SK-N-SH (cell line): ENCODE measurements at regions of chr7 and their contacts with region 1.

Region 1: GRCh38 chr7:98617051-98617959 is at the start of gene NPTX2:
- DNase-seq: peak; percentile 99
- H3K4me3 ChIP-seq: peak within 1 kb of the TSS in 1 of 2 experiments; percentile 52; a peak in 2 of 4 replicates
- H3K27ac ChIP-seq: peak within 1 kb of the TSS in 1 of 2 experiments; percentile 28; a peak in 1 of 4 replicates
- H3K4me1 ChIP-seq: peaks cover 0 to 48% of the 10 kb centered on the region in 2 experiments; a peak in 2 of 4 replicates
- H3K27me3 ChIP-seq: no peaks in the 10 kb centered on the region
- CTCF ChIP-seq: no peak
- EP300 ChIP-seq: no peak
- RAD21 ChIP-seq: peak; percentile 48
- polyA plus RNA-seq, gene NPTX2: 0.41 and 1.2 TPM in 2 replicates

Region 2: GRCh38 chr7:98555403-98555802 is 61.9 kb before region 1 on chr7:
- CTCF ChIA-PET with region 1: interaction called, 7 read pairs
- POLR2A ChIA-PET with region 1: interaction called, 15 read pairs
- DNase-seq: no peak
- H3K4me3 ChIP-seq: no peak overlapping the region
- H3K27ac ChIP-seq: peak overlapping the region in 1 of 2 experiments; percentile 81; a peak in 2 of 4 replicates
- H3K4me1 ChIP-seq: peaks cover 0 to 37% of the 10 kb centered on the region in 2 experiments; a peak in 1 of 4 replicates
- H3K27me3 ChIP-seq: no peaks in the 10 kb centered on the region
- CTCF ChIP-seq: no peak
- EP300 ChIP-seq: no peak
- RAD21 ChIP-seq: no peak

Region 3: DNA sequence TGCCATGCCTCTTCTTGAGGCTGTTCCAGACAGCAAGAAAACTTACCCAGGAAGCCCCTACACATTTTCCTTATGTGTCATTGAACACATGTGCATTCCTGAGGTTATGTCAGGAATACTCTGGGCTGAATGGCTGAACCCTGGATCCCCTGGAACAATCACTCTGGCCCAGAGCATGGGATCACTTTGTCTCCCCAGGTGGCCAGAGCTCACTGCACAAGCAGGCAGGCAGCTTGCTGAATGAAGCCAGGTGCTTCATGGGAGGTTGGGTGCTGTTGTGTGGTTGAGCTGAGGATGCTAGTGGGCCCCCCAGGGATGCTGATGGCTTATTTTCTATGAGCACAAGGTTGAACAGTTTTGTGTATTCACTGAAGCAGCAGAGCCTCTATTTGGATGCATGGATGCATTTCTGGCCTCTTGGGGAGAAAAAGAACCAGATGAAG is 54.9 kb before region 1 on chr7:
- CTCF ChIA-PET with region 1: interaction called, 22 read pairs
- POLR2A ChIA-PET with region 1: interaction called, 15 read pairs
- DNase-seq: no peak
- H3K4me3 ChIP-seq: no peak overlapping the region
- H3K27ac ChIP-seq: peak overlapping the region in 1 of 2 experiments; percentile 88; a peak in 2 of 4 replicates
- H3K4me1 ChIP-seq: peaks cover 0 to 38% of the 10 kb centered on the region in 2 experiments; a peak in 2 of 4 replicates
- H3K27me3 ChIP-seq: no peaks in the 10 kb centered on the region
- CTCF ChIP-seq: no peak
- EP300 ChIP-seq: no peak
- RAD21 ChIP-seq: no peak

Region 4: GRCh38 chr7:98568891-98569290 is 48.4 kb before region 1 on chr7:
- CTCF ChIA-PET with region 1: interaction called, 22 read pairs
- POLR2A ChIA-PET with region 1: interaction called, 11 read pairs
- DNase-seq: peak; percentile 83
- H3K4me3 ChIP-seq: no peak overlapping the region
- H3K27ac ChIP-seq: peak overlapping the region in 1 of 2 experiments; percentile 86; a peak in 2 of 4 replicates
- H3K4me1 ChIP-seq: peaks cover 0 to 37% of the 10 kb centered on the region in 2 experiments; a peak in 2 of 4 replicates
- H3K27me3 ChIP-seq: no peaks in the 10 kb centered on the region
- CTCF ChIP-seq: no peak
- EP300 ChIP-seq: peak in 1 of 2 experiments; percentile 62; a peak in 1 of 4 replicates
- RAD21 ChIP-seq: peak; percentile 43

Region 5: GRCh38 chr7:98598846-98599615 is 18.3 kb before region 1 on chr7:
- CTCF ChIA-PET with region 1: interaction called, 29 read pairs
- POLR2A ChIA-PET with region 1: interaction called, 4 read pairs
- DNase-seq: no peak
- H3K4me3 ChIP-seq: no peak overlapping the region
- H3K27ac ChIP-seq: no peak overlapping the region
- H3K4me1 ChIP-seq: no peaks in the 10 kb centered on the region; a peak in 1 of 4 replicates
- H3K27me3 ChIP-seq: no peaks in the 10 kb centered on the region
- CTCF ChIP-seq: no peak
- EP300 ChIP-seq: no peak
- RAD21 ChIP-seq: no peak

Region 6: GRCh38 chr7:98629001-98629431 is 11.7 kb after region 1 on chr7:
- CTCF ChIA-PET with region 1: interaction called, 16 read pairs
- POLR2A ChIA-PET with region 1: interaction called, 4 read pairs
- DNase-seq: no peak
- H3K4me3 ChIP-seq: no peak overlapping the region
- H3K27ac ChIP-seq: no peak overlapping the region
- H3K4me1 ChIP-seq: no peaks in the 10 kb centered on the region
- H3K27me3 ChIP-seq: no peaks in the 10 kb centered on the region
- CTCF ChIP-seq: no peak
- EP300 ChIP-seq: no peak
- RAD21 ChIP-seq: no peak